A673 (cell line): ENCODE measurements at regions of chr5 and their contacts with region 1.

Region 1: GRCh38 chr5:150560401-150561193 is 52.7 kb downstream of the NDST1 start:
- DNase-seq: peak; percentile 90
- H3K4me3 ChIP-seq: no peak overlapping the region
- H3K27ac ChIP-seq: no peak overlapping the region
- H3K4me1 ChIP-seq: no peaks in the 10 kb centered on the region
- H3K27me3 ChIP-seq: no peaks in the 10 kb centered on the region
- CTCF ChIP-seq: peak; percentile 86

Region 2: DNA sequence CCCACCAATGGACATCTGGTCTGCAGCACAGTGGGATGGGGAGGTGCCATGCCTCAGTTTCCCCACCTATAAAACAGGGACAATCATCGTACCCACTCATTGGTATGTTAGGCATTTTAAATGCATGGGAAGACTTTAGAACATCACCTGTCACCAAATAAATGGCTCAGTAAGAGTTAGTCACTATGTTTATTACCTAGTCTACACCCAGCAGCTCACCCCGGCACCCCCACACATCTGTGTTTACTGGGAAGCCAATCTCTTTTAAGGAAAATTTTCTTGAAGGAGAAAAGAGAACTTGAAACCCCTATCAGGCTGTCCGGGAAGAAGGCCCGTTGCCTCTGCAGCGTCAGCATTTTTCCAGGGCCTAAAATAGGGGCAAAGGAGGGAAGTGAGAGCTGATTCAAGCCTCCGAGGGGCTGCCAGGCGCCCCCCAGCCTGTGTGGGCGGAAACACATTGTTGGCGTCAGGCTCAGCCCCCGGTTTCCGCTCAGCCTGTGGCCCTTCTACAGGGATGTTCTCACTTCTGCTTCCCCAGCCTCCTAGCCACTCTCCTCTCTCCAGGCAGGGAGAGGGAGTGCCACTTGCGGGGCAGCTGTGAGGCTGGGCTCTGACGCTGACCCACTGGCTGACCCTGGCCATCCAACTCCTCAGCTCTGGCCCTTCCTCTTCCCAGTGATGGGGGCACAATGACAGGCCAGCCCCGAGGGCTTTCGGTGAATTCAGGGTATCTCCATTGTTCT is 478.9 kb before region 1 on chr5:
- CTCF ChIA-PET with region 1: no interaction called
- POLR2A ChIA-PET with region 1: no interaction called
- intact Hi-C with region 1: no loop called
- DNase-seq: no peak
- H3K4me3 ChIP-seq: no peak overlapping the region
- H3K27ac ChIP-seq: no peak overlapping the region
- H3K4me1 ChIP-seq: no peaks in the 10 kb centered on the region
- H3K27me3 ChIP-seq: no peaks in the 10 kb centered on the region
- CTCF ChIP-seq: no peak

Region 3: DNA sequence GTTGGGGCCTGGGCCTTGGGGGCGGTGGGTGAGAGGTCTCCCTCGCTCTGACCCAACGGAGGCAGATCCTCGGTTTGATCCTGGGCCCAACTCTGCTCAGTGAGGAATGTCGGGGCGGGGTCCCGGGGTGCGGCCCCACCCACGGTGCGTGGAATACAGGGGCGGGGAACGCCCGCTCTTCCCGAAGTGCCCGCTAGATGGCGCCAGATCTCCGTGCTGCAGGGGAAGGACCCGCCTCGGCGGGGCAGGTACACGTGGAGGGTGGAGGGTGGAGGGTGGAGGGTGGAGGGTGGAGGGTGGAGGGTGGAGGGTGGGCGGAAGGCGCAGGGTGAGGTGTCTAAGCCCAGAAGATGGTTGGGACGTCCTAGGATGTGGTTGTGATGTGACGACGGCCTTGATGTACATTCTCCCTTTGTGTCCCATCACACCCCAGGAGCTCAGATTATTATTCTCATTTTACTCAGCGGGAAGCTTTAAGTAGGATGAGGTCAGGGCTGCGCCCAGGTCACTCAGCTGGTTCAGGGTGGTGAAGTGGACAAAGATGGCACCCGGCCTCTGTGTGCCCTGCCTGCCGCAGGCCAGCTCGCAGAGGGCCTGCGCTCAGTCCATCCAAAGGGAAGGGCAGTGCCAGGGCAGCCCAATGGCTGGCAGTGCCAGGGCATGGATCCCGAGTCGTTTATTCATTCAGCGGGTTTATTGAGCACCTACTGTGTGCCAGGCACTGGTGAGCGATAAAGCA is 101.6 kb before region 1 on chr5:
- CTCF ChIA-PET with region 1: interaction called, 4 read pairs
- POLR2A ChIA-PET with region 1: no interaction called
- intact Hi-C with region 1: loop called (anchors 5 kb)
- DNase-seq: peak; percentile 86
- H3K4me3 ChIP-seq: peak overlapping the region; percentile 27
- H3K27ac ChIP-seq: no peak overlapping the region
- H3K4me1 ChIP-seq: no peaks in the 10 kb centered on the region
- H3K27me3 ChIP-seq: no peaks in the 10 kb centered on the region
- CTCF ChIP-seq: peak; percentile 74

Region 4: GRCh38 chr5:150656191-150657132 is 95.9 kb after region 1 on chr5:
- CTCF ChIA-PET with region 1: no interaction called
- POLR2A ChIA-PET with region 1: no interaction called
- intact Hi-C with region 1: loop called (anchors 1 kb)
- DNase-seq: peak; percentile 83
- H3K4me3 ChIP-seq: peak overlapping the region; percentile 66
- H3K27ac ChIP-seq: peak overlapping the region; percentile 73
- H3K4me1 ChIP-seq: peaks cover 9% of the 10 kb centered on the region
- H3K27me3 ChIP-seq: no peaks in the 10 kb centered on the region
- CTCF ChIP-seq: peak; percentile 54

Region 5: DNA sequence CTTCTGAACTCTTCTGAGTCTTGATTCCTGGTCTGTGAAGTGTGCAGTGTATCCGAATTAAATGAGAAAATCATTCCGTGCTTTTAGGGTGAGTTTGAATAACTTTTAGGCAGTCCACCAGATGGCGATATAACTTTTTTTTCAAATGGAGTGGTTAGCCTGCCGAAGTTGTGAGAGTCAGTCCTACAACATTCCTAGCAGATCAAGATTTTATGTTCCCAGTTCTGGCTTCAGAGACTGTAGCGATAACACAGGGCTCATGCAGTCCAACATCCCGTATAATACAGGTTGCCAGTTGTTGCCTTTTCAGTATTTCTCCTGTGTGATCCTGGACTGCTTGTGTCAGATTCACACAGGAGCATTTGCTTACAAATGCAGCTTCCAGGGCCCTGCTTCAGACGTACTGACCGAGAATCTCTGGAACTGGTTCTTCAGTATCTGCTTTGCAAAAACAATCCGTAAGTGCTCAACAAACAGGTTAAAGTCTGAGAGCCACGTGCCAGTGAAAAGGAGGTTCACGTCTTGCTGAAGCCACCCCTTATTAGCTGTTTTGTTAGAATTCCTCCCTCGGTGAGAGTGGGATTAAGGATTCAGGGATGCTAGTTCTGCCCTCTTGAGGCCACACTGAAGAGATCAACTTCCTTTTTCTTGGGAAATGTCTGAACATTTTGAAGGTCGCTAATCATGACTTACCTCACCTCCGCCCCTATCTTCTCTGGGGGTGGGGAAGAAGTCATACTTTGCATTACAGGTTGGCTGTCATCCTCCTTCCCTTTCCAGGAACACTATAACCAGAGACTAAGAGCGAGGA is 240.7 kb after region 1 on chr5:
- CTCF ChIA-PET with region 1: interaction called, 5 read pairs
- POLR2A ChIA-PET with region 1: no interaction called
- intact Hi-C with region 1: loop called (anchors 5 kb)
- DNase-seq: peak; percentile 83
- H3K4me3 ChIP-seq: peak overlapping the region; percentile 42
- H3K27ac ChIP-seq: no peak overlapping the region
- H3K4me1 ChIP-seq: no peaks in the 10 kb centered on the region
- H3K27me3 ChIP-seq: no peaks in the 10 kb centered on the region
- CTCF ChIP-seq: peak; percentile 59

Region 6: GRCh38 chr5:151157426-151158286 is 597.1 kb after region 1 on chr5 and contains the start of gene ANXA6:
- CTCF ChIA-PET with region 1: no interaction called
- POLR2A ChIA-PET with region 1: no interaction called
- intact Hi-C with region 1: loop called (anchors 10 kb)
- DNase-seq: peak; percentile 91
- H3K4me3 ChIP-seq: peak within 1 kb of the TSS; percentile 67
- H3K27ac ChIP-seq: peak within 1 kb of the TSS; percentile 74
- H3K4me1 ChIP-seq: peaks cover 33% of the 10 kb centered on the region
- H3K27me3 ChIP-seq: no peaks in the 10 kb centered on the region
- CTCF ChIP-seq: no peak
- total RNA-seq, gene ANXA6: 95.9 and 130 TPM in 2 replicates